Ovary (tissue), 10 donors: ENCODE measurements at regions of chr16 and their contacts with region 1.

Region 1: GRCh38 chr16:28823872-28824716 is 1.3 kb downstream of the ATXN2L start:
- DNase-seq: peak; percentile 97 to 99 (median 98)
- H3K4me3 ChIP-seq: peak overlapping the region; percentile 100
- H3K27ac ChIP-seq: peak overlapping the region; percentile 98 to 99
- H3K4me1 ChIP-seq: no peaks in the 10 kb centered on the region
- H3K27me3 ChIP-seq: no peaks in the 10 kb centered on the region
- CTCF ChIP-seq: peak in 2 of 3 donors; percentile 27 to 38
- EP300 ChIP-seq: no peak
- POLR2A ChIP-seq: peak; percentile 44

Region 2: DNA sequence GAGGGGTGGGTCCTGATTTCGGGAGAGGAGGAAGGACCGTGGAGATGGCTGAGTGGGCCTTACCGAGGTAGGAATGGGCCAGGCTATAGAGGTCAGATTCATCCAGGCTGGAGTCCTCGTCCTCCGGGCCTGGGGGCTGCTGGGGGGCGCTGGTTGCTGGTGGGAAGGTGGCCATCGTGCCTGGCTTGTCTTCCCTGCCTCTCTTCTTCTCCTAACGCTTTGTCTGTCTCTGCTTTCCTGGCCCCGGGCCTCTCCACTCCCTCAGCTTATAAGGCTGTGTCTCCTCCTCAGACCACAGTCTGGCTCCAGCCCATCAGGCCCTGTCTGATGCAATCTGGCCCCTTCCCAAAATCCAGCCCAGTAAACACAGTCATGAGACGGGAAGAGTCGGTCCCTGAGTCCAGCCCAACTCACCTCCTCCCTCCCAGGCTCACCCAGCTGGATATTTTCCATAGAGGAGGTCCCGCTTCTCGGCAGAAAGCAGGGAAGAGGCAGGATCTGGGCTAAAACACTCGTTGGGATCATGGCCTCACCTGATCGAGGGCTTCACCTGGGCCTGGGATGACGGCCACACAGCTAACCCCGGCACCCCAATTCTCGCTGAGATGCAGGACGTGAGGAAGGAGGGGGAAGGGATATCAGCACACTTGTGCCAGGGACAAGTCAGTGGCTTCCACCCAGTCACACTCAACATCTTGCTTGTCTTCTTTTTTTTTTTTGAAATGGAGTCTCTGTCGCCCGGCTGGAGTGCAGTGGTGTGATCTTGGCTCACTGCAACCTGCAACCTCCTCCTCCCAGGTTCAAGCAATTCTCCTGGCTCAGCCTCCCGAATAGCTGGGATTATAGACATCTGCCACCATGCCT is 285.1 kb before region 1 on chr16 and contains the start of gene NUPR1:
- intact Hi-C with region 1: no loop called
- DNase-seq: peak; percentile 96 to 99 (median 98)
- H3K4me3 ChIP-seq: peak within 1 kb of the TSS; percentile 42
- H3K27ac ChIP-seq: peak within 1 kb of the TSS; percentile 91 to 96
- H3K4me1 ChIP-seq: peaks cover 18% of the 10 kb centered on the region
- H3K27me3 ChIP-seq: no peaks in the 10 kb centered on the region
- CTCF ChIP-seq: no peak
- EP300 ChIP-seq: no peak
- POLR2A ChIP-seq: peak; percentile 88
- total RNA-seq, gene NUPR1: 25.5 to 355 (median 129) TPM

Region 3: DNA sequence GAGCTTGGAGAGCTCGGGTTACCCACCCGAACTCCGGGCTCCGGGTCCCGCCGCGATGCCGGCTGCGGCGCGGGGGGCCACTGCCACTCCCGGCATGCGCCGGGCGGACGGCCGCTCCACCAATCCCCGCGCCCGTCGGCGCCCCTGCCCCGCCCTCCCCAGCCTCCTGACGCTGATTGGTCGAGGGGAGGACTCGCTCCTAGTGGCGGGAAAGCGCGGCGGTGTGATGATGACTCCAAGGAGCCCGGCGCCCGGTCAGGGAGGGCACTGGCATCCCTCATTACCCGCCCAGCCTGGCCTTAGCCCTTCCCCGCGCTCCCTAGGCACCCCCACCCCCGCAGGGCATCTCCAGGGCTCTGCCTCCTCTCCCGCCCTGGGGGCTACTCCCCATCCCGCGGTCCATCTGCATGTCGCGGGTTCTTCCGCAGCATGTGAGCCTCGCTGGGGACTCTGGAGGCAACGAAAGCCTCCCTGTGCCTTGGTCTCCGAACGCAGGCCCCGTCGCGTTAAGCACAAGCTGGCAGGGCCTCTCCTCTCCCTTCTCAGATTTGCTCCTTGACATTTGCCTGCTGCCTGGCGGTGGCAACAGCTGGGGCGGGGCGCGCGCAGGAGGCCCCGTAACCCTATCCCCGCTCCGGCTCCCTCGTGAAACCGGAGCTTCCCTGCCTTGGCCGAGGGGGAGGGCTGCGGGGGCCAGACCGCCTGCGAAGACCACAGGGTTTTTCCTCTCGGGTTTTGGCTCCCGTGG is 55.9 kb after region 1 on chr16:
- intact Hi-C with region 1: loop called in 1 of 4 experiments (anchors 5 kb)
- DNase-seq: peak; percentile 80 to 90 (median 87)
- H3K4me3 ChIP-seq: peak overlapping the region; percentile 63
- H3K27ac ChIP-seq: no peak overlapping the region
- H3K4me1 ChIP-seq: peaks cover 7% of the 10 kb centered on the region
- H3K27me3 ChIP-seq: no peaks in the 10 kb centered on the region
- CTCF ChIP-seq: peak in 1 of 3 donors; percentile 47
- EP300 ChIP-seq: no peak
- POLR2A ChIP-seq: no peak

Region 4: DNA sequence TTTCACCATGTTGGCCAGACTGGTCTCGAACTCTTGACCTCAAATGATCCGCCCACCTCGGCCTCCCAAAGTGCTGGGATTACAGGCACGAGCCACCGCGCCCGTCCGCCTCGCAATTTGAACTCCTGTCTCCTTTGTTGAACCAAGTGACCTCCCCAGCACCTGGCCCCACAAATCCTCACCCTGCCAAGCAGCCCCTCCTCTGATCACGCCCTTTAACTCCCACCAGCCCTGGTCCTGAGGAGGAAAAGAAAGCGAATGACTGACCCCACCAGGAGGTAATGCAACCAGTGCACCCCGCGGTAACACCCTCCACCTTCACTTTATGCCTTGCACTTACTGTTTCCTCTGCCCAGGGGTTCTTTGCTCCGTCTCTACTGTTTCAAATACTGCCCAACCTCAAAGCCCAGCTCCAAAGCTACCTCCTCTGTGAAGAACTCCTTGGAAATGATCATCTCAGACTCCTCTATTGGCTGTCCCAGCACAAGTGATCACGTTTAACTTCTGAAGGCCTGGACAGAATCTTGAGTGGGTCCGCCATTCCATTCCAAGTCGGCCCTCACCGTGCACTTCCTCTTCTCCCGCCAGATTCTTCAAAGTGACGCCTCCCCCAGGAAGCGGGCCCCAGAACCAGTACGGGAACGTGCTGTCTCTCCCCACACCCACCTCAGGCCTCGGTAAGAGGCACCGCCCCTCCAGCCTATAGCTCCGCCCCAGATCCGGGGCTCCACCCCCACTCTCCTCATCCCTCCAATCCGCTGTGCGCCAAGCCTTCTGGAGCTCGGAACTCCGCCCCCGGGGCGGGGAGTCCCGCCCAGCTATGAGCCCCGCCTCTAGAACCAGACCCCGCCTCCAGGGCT is 112.1 kb after region 1 on chr16:
- intact Hi-C with region 1: loop called in 2 of 4 experiments (anchors 10 kb)
- DNase-seq: peak; percentile 76 to 87 (median 82)
- H3K4me3 ChIP-seq: no peak overlapping the region
- H3K27ac ChIP-seq: no peak overlapping the region
- H3K4me1 ChIP-seq: peaks cover 5% of the 10 kb centered on the region
- H3K27me3 ChIP-seq: no peaks in the 10 kb centered on the region
- CTCF ChIP-seq: no peak
- EP300 ChIP-seq: no peak
- POLR2A ChIP-seq: no peak

Region 5: GRCh38 chr16:28943281-28943680 is 119.2 kb after region 1 on chr16:
- intact Hi-C with region 1: loop called in 3 of 4 experiments (anchors 5 to 10 kb)
- DNase-seq: no peak
- H3K4me3 ChIP-seq: no peak overlapping the region
- H3K27ac ChIP-seq: no peak overlapping the region
- H3K4me1 ChIP-seq: peaks cover 3% of the 10 kb centered on the region
- H3K27me3 ChIP-seq: no peaks in the 10 kb centered on the region
- CTCF ChIP-seq: no peak
- EP300 ChIP-seq: no peak
- POLR2A ChIP-seq: no peak